ENCODE measurements at regions of chr4 and their contacts with region 1.

Region 1: GRCh38 chr4:39469429-39470077 is 10.7 kb downstream of the LIAS start:
- DNase-seq: peak; percentile 62
- H3K4me3 ChIP-seq: peak overlapping the region in 1 of 2 experiments; percentile 16; a peak in 1 of 4 replicates
- H3K27ac ChIP-seq: peak overlapping the region; percentile 50 to 68
- H3K4me1 ChIP-seq: peaks cover 2 to 5% of the 10 kb centered on the region in 2 experiments; a peak in 2 of 4 replicates
- H3K27me3 ChIP-seq: no peaks in the 10 kb centered on the region
- CTCF ChIP-seq: peak; percentile 98
- EP300 ChIP-seq: peak in 1 of 2 experiments; percentile 55; a peak in 1 of 4 replicates
- RAD21 ChIP-seq: peak; percentile 91

Region 2: DNA sequence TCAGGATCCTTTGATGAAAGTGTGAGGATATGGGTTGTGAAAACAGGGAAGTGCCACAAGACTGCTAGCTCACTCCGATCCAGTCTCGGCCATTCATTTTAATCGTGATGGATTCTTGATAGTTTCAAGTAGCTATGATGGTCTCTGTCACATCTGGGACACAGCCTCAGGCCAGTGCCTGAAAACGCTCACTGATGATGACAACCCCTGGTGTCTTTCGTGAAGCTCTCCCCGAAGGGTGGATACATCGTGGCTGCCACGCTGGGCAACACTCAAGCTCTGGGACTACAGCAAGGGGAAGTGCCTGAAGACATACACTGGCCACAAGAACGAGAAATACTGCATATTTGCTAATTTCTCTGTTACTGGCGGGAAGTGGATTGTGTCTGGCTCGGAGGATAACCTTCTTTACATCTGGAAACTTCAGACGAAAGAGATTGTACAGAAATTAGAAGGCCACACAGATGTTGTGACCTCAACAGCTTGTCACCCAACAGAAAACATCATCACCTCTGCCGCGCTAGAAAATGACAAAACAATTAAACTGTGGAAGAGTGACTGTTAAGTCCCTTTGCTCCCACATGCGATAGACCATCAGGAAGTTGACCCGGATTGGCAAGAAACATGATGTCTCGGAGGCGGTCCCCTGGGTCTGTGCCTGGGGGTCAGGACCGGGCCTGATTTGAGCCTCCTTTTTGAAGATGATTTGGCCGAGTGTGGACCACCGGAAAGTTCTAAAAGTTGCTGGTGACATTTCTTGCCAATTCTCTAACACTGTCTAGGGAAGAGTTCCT is 11.5 kb after region 1 on chr4:
- CTCF ChIA-PET with region 1: interaction called, 14 read pairs
- POLR2A ChIA-PET with region 1: no interaction called
- DNase-seq: no peak
- H3K4me3 ChIP-seq: no peak overlapping the region
- H3K27ac ChIP-seq: no peak overlapping the region
- H3K4me1 ChIP-seq: no peaks in the 10 kb centered on the region; a peak in 1 of 4 replicates
- H3K27me3 ChIP-seq: no peaks in the 10 kb centered on the region
- CTCF ChIP-seq: no peak
- EP300 ChIP-seq: no peak
- RAD21 ChIP-seq: no peak

Region 3: GRCh38 chr4:39521253-39521919 is 51.8 kb after region 1 on chr4:
- CTCF ChIA-PET with region 1: interaction called, 13 read pairs
- POLR2A ChIA-PET with region 1: interaction called, 4 read pairs
- DNase-seq: peak; percentile 61
- H3K4me3 ChIP-seq: peak overlapping the region; percentile 21 to 47; a peak in 2 of 4 replicates
- H3K27ac ChIP-seq: peak overlapping the region; percentile 71 to 98
- H3K4me1 ChIP-seq: peaks cover 2 to 16% of the 10 kb centered on the region in 2 experiments; a peak in 2 of 4 replicates
- H3K27me3 ChIP-seq: no peaks in the 10 kb centered on the region
- CTCF ChIP-seq: no peak
- EP300 ChIP-seq: peak; percentile 9 to 73; a peak in 1 of 4 replicates
- RAD21 ChIP-seq: no peak

Region 4: DNA sequence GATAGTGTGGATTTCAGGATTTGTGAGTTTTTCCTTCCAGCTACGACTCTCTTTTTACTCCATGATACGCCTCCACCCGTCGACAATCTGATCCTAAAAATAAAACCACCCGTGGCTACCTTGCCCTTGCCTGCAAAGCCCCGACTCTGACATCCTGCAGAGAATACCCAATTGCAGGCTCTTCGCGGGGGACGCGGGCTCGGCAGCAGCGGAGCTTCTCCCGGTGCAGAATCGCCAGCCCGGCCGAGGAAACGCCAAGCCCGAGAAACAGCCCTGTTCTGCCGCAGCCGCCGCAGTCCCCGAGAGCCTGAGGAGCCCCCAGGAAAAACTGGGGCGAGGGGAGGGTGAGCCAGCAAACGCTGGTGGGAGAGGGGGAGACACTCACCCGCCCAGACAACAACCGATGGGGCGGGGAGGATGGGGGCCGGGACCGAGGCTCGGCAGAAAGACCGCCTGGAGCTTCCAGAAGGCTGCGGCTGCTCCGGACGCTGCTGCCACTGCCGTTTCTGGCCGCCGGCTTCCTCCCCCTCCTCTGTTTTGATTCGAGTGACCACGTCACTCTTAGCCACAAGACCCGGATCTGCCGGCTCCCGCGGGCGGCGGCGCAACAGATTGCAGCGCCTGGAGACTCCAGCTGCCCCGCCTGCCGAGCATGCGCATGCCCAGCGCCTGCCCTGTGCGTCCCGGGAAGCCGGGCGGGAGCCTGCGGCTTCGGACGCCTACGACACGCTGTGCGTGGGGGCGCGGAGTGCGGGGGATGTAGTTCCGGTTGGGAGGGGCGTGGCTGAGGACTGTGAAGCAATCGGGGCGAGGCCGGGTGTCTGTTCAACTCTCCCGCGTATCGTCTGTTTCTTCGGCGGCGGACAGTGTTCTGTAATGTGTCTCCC is 169.0 kb after region 1 on chr4 and contains the start of gene SMIM14:
- CTCF ChIA-PET with region 1: interaction called, 30 read pairs
- POLR2A ChIA-PET with region 1: no interaction called
- DNase-seq: peak; percentile 98
- H3K4me3 ChIP-seq: peak within 1 kb of the TSS; percentile 85
- H3K27ac ChIP-seq: peak within 1 kb of the TSS; percentile 91 to 99
- H3K4me1 ChIP-seq: peaks cover 5 to 6% of the 10 kb centered on the region in 2 experiments; a peak in 3 of 4 replicates
- H3K27me3 ChIP-seq: no peaks in the 10 kb centered on the region
- CTCF ChIP-seq: no peak
- EP300 ChIP-seq: peak; percentile 7 to 42; a peak in 2 of 4 replicates
- RAD21 ChIP-seq: no peak
- polyA plus RNA-seq, gene SMIM14: 11.1 and 12.6 TPM in 2 replicates

Region 5: GRCh38 chr4:39786838-39787237 is 317.3 kb after region 1 on chr4:
- CTCF ChIA-PET with region 1: no interaction called
- POLR2A ChIA-PET with region 1: no interaction called
- DNase-seq: no peak
- H3K4me3 ChIP-seq: no peak overlapping the region
- H3K27ac ChIP-seq: no peak overlapping the region
- H3K4me1 ChIP-seq: no peaks in the 10 kb centered on the region
- H3K27me3 ChIP-seq: no peaks in the 10 kb centered on the region
- CTCF ChIP-seq: no peak
- EP300 ChIP-seq: no peak
- RAD21 ChIP-seq: no peak

Region 6: DNA sequence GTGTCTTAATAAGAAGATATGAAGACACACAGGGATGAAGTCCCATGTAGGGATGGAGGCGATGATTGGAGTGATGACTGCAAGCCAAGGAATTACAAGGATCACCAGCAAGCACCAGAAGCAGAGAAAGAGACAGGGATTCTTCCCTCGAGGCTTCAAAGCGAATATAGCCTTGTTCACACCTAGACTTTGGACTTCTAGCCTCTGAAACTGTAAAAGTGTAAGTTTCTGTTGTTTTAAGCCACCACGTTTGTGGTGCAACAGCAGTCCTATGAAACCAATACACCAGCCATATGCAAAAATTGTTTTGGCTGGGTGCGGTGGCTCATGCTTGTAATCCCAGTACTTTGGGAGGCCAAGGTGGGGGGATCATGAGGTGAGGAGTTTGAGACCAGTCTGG is 517.9 kb after region 1 on chr4:
- CTCF ChIA-PET with region 1: no interaction called
- POLR2A ChIA-PET with region 1: no interaction called
- DNase-seq: no peak
- H3K4me3 ChIP-seq: no peak overlapping the region
- H3K27ac ChIP-seq: no peak overlapping the region
- H3K4me1 ChIP-seq: no peaks in the 10 kb centered on the region
- H3K27me3 ChIP-seq: no peaks in the 10 kb centered on the region
- CTCF ChIP-seq: no peak
- EP300 ChIP-seq: no peak
- RAD21 ChIP-seq: no peak

Measured in SK-N-SH (cell line).